Pancreas (tissue), 10 donors: ENCODE measurements at regions of chr9 and their contacts with region 1.

Region 1: DNA sequence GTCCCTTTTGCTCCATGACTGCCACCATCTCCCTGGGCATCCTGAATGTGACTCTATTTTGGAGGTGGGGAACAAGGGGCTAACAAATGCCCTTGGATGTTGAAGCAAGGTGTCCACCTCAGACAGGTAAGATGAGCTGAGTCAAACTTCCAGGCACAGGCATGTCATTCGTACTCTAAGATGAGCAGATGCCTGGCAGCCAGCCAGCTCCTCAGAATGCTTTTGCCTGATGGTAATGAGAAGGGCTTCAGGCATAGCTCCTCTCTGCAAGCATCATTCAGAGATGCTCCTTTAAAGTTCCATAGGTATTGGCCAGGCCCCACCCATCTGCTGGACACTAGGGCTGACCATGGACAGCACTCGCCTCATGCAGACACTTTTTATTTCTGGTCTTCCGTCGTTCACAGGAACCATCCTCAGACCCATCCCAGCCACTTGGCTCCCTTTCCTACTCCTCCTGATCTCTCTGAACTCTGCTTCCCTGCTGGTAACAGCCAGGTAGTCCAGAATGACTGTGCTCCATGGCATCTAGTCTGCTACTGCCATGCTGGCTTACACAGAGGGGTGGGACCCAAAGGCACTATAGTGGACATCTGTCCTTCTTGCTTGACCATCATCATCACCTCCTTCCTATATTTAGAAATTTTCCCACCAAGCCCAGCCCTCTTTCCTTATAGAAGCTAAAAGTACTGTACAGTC is 118.8 kb downstream of the GLIS3 start:
- DNase-seq: peak in 2 of 6 donors; percentile 19 to 55
- ATAC-seq: no peak
- H3K4me3 ChIP-seq: no peak overlapping the region
- H3K27ac ChIP-seq: no peak overlapping the region
- H3K4me1 ChIP-seq: no peaks in the 10 kb centered on the region
- H3K27me3 ChIP-seq: no peaks in the 10 kb centered on the region
- CTCF ChIP-seq: no peak

Region 2: GRCh38 chr9:4243113-4243512 is 62.1 kb after region 1 on chr9:
- intact Hi-C with region 1: loop called in 1 of 3 experiments (anchors 10 kb)
- DNase-seq: no peak
- ATAC-seq: peak in 3 of 4 donors; percentile 19 to 57 (median 51)
- H3K4me3 ChIP-seq: no peak overlapping the region
- H3K27ac ChIP-seq: no peak overlapping the region
- H3K4me1 ChIP-seq: peaks cover 0 to 6% (median 2%) of the 10 kb centered on the region in 3 donors
- H3K27me3 ChIP-seq: no peaks in the 10 kb centered on the region
- CTCF ChIP-seq: no peak